ENCODE measurements at regions of chr19 and their contacts with region 1.

Region 1: GRCh38 chr19:55605207-55605636 is 225 bp upstream of the ZNF865 start:
- DNase-seq: peak; percentile 99
- H3K4me3 Mint-ChIP-seq: peak overlapping the region; percentile 83
- H3K27ac Mint-ChIP-seq: peak overlapping the region; percentile 93
- H3K4me1 Mint-ChIP-seq: peaks cover 34% of the 10 kb centered on the region
- H3K27me3 Mint-ChIP-seq: no peaks in the 10 kb centered on the region

Region 2: DNA sequence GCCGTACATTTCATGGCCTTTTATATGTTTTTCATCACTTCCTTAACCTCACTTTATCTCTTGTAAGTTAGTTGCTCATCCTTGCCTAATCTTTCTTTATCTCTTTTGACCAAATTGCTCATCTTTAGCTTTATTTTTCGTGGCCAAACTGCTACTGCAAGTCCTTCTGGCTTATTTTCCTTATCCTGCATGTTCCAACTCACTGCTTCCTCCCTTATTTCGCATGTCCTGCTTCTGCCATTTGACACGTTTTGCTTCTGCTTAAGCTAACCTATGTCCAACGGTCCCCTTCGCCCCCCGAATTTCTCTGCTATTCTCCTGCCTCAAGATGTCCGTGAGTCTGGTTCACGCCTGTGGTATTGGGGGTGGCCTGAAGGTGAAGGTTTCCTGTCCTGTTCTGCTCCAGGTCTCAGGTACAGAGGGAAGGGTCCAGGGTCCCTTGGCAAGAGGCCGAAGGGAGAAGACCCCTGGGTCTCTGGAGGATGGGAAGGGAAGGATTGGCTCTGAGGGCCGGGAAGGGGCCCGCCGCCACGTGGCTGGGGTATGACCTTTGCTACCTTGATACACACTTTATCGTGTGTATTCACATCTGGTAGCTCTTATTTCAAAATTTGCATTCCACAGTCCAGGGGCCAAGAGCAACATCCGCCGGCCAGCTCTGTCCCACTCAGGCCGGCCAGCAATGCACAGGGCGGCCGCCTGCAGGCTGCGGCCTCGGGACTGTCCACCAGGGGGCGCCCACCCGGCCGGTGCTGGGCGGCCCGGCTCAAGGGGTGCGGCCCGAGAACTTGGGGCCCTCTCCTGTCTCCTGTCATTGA is 137.8 kb before region 1 on chr19:
- intact Hi-C with region 1: no loop called
- DNase-seq: peak; percentile 60
- H3K4me3 Mint-ChIP-seq: no peak overlapping the region
- H3K27ac Mint-ChIP-seq: no peak overlapping the region
- H3K4me1 Mint-ChIP-seq: peaks cover 7% of the 10 kb centered on the region
- H3K27me3 Mint-ChIP-seq: no peaks in the 10 kb centered on the region

Region 3: DNA sequence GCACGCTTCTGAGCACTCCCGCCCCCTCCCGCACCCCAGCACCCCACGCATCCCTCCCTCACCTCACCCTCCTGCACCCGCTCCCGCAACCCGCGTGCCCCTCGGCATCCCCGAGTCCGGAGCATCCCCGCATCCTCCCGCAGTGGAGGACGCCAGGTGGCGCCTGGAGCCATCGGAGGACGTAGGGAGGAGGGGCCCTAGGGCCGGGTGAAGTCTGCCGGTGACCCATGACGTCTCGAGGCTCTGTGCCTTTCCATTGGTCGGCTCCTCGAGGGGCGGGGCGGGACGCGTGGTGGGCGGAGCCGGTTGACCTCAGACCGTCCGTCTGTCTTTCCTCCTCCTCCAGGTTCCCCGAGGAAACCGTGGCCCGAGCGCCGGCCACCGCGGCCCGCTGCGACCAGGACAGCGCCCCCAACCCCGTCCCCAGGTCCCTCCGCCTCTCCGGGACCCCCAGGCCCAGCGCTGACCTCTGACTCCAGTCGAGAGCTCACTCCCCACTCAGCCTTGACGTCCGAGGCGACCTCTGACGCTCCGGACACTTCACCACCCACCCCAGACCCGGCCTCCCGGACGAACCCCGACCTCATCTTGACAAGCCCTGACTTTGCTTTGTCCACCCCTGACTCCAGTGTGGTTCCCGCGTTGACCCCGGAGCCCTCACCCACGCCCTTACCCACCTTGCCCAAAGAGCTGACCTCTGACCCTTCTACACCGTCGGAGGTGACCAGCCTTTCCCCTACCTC is 88.2 kb before region 1 on chr19:
- intact Hi-C with region 1: loop called (anchors 1 kb)
- DNase-seq: peak; percentile 86
- H3K4me3 Mint-ChIP-seq: peak overlapping the region; percentile 67
- H3K27ac Mint-ChIP-seq: peak overlapping the region; percentile 59
- H3K4me1 Mint-ChIP-seq: peaks cover 2% of the 10 kb centered on the region
- H3K27me3 Mint-ChIP-seq: peaks cover 3% of the 10 kb centered on the region

Region 4: GRCh38 chr19:55580628-55581144 is 24.5 kb before region 1 on chr19 and contains the start of gene ZNF579:
- intact Hi-C with region 1: loop called (anchors 1 kb)
- DNase-seq: peak; percentile 68
- H3K4me3 Mint-ChIP-seq: peak within 1 kb of the TSS; percentile 88
- H3K27ac Mint-ChIP-seq: peak within 1 kb of the TSS; percentile 81
- H3K4me1 Mint-ChIP-seq: peaks cover 19% of the 10 kb centered on the region
- H3K27me3 Mint-ChIP-seq: peaks cover 7% of the 10 kb centered on the region
- total RNA-seq, gene ZNF579: 8.2 and 10.7 TPM in 2 replicates

Region 5: DNA sequence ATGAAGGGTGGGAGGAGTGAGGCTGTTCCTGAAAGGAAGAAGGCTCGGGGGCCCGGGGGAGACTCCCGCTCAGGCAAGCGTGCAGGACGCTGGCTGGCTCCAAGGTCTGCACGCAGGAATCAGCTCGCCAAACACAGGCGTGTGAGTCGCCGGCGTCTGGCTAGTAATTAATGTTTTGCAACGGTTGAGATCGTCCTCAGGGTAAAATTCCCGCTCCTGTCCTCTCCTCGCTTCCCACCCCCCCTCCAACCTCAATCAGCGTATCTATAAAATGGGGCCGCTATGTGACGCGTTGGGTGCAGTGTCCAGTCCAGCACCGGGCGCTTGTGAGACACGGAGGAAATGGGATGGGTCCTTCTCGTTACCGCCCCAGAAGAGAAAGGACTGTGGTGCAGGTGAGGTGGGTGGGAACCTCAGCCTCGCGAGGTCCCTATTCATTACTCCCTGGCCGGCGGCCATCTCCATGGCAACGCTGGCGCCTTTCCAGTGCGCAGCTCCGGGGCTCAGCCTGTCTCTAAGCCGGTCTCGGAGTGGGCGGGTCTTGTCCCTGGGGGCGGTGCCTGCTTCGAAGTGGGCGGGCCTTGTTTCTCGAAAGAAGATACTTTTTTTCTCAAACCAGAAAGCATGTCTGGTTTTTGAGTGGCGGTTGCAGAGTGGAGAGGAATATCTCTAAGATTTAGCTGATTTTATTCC is 18.1 kb before region 1 on chr19:
- intact Hi-C with region 1: loop called (anchors 2 kb)
- DNase-seq: peak; percentile 86
- H3K4me3 Mint-ChIP-seq: peak overlapping the region; percentile 75
- H3K27ac Mint-ChIP-seq: no peak overlapping the region
- H3K4me1 Mint-ChIP-seq: peaks cover 13% of the 10 kb centered on the region
- H3K27me3 Mint-ChIP-seq: peaks cover 13% of the 10 kb centered on the region

Region 6: DNA sequence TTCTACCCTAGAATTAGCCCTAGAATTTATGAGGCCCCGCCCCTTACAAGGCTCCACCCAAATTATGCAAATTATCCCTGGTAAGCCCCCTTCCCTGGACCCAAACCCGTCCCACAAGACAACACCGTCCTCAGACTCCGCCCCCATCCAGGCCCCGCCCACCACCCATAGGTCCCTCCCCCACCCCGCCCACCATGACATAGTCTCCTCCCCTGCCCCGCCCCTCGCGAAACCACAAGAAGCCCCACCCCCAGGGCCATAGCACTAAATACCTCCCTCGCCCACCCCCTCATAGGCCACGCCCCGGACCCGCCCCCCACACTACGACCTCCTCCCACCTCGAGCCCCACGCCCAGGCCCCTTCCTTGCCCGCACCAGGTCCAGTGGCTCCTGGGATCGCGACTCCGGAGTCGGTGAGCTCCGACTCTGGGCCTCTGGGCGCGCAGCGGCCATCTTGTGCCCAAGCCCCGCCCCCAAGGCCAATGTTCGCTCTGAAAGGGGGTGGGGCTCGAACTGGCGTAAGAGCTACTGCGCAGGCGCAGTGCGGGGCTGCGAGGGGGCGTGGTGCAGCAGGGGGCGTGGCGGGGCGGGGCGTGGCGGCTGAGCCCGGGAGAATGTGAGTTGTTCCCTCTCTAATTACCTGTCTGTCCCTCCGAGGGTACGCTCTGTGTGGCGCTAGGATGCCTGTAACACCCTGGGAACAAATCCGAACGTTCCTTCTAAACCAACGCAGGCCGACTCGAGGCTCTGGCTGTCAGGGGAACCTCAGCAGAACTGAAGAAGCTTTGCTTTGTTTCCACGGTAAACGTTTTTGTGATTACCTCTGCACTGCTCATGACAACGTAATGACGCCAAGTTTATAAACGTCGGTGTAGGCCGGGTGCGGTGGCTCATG is 19.1 kb after region 1 on chr19 and contains the start of gene ZNF784:
- intact Hi-C with region 1: loop called (anchors 1 kb)
- DNase-seq: peak; percentile 89
- H3K4me3 Mint-ChIP-seq: peak within 1 kb of the TSS; percentile 89
- H3K27ac Mint-ChIP-seq: peak within 1 kb of the TSS; percentile 98
- H3K4me1 Mint-ChIP-seq: peaks cover 36% of the 10 kb centered on the region
- H3K27me3 Mint-ChIP-seq: peaks cover 6% of the 10 kb centered on the region
- total RNA-seq, gene ZNF784: 4.3 and 4.9 TPM in 2 replicates

Region 7: GRCh38 chr19:55653758-55654539 is 48.7 kb after region 1 on chr19:
- intact Hi-C with region 1: loop called (anchors 2 kb)
- DNase-seq: peak; percentile 99
- H3K4me3 Mint-ChIP-seq: peak overlapping the region; percentile 91
- H3K27ac Mint-ChIP-seq: peak overlapping the region; percentile 99
- H3K4me1 Mint-ChIP-seq: peaks cover 27% of the 10 kb centered on the region
- H3K27me3 Mint-ChIP-seq: no peaks in the 10 kb centered on the region

Region 8: GRCh38 chr19:55923556-55923955 is 318.3 kb after region 1 on chr19:
- intact Hi-C with region 1: no loop called
- DNase-seq: no peak
- H3K4me3 Mint-ChIP-seq: no peak overlapping the region
- H3K27ac Mint-ChIP-seq: no peak overlapping the region
- H3K4me1 Mint-ChIP-seq: no peaks in the 10 kb centered on the region
- H3K27me3 Mint-ChIP-seq: no peaks in the 10 kb centered on the region

Measured in activated T-helper 2 cell treated with anti-CD3 and anti-CD28 coated beads, Interferon-gamma antibody, Interleukin-2, Interleukin-4, amounts not matched to agents 10 μg/mL and 5 μg/mL and 100 μg/mL, durations not matched to agents 14 hours and 24 hours and 36 hours (primary cell).